ENCODE measurements at regions of chr2 and their contacts with region 1.

Region 1: GRCh38 chr2:67290451-67291290 is 106.5 kb upstream of the ETAA1 start:
- DNase-seq: peak; percentile 74 to 99
- H3K4me3 ChIP-seq: peak overlapping the region; percentile 25; the same call in 1 of the 2 replicates
- H3K27ac ChIP-seq: peak overlapping the region; percentile 98
- H3K4me1 ChIP-seq: peaks cover 39% of the 10 kb centered on the region
- H3K27me3 ChIP-seq: no peaks in the 10 kb centered on the region
- CTCF ChIP-seq: no peak

Region 2: DNA sequence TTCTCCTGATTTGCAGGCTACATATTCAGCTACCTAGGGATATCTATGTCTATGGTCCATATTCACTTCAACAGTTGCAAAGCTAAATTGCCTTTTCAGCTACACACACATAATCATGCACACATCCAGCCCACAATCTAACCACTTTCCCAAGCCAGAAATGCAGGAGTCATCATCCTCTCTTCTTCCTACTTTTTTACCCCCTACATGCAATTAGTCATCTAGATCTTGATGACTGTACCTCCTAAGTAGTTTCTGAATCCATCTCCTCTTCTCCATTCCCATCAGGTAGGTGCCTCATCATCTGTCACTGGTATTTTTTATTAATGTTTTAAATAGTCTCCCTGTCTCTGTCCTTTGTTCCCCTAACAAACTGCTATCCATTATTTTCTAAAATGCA is 1834.6 kb before region 1 on chr2:
- CTCF ChIA-PET with region 1: no interaction called
- POLR2A ChIA-PET with region 1: no interaction called
- intact Hi-C with region 1: loop called (anchors 2 kb)
- DNase-seq: peak in 1 of 2 experiments; percentile 65
- H3K4me3 ChIP-seq: no peak overlapping the region
- H3K27ac ChIP-seq: no peak overlapping the region
- H3K4me1 ChIP-seq: peaks cover 69% of the 10 kb centered on the region
- H3K27me3 ChIP-seq: no peaks in the 10 kb centered on the region
- CTCF ChIP-seq: no peak

Region 3: DNA sequence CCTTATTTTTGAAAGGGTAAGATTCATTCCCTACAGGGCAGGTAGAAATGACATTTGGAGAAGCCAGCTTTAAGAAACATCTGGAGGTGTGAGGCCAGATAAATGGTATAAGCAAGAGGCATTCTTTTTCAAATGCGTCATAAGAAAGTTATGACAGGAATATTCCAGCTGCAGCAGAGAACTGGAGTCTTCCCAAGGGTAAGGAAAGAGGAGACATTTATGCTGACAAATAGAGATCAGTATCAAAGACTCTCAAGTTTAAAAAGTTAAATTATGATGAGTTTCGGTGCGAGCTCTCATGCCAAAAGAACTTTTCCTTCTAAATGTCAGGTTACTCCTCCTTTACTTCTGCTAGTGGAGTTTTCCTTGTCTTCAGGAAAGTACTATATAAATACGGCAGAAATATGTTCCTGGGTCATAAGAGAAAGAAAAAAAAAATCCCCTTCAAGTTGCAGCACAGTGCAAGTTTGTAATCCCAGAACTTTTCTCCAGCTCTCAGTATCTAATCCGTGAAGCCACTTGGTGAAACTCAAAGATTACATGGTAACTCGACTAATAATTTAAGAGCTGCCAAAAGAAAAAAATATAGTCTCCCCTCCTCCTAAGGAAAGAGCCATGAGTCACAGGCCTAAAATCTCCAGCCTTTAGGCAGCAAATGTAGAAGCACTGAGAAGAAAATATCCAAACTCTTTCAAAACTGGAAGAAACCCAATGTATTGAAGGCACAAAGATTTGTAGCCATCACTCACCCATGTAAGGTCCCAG is 427.6 kb before region 1 on chr2:
- CTCF ChIA-PET with region 1: no interaction called
- POLR2A ChIA-PET with region 1: no interaction called
- intact Hi-C with region 1: no loop called
- DNase-seq: no peak
- H3K4me3 ChIP-seq: no peak overlapping the region
- H3K27ac ChIP-seq: no peak overlapping the region
- H3K4me1 ChIP-seq: no peaks in the 10 kb centered on the region
- H3K27me3 ChIP-seq: no peaks in the 10 kb centered on the region
- CTCF ChIP-seq: no peak

Region 4: GRCh38 chr2:67221266-67221665 is 69.4 kb before region 1 on chr2:
- CTCF ChIA-PET with region 1: no interaction called
- POLR2A ChIA-PET with region 1: no interaction called
- intact Hi-C with region 1: no loop called
- DNase-seq: no peak
- H3K4me3 ChIP-seq: no peak overlapping the region
- H3K27ac ChIP-seq: no peak overlapping the region
- H3K4me1 ChIP-seq: no peaks in the 10 kb centered on the region
- H3K27me3 ChIP-seq: no peaks in the 10 kb centered on the region
- CTCF ChIP-seq: no peak

Region 5: GRCh38 chr2:67259581-67260342 is 30.9 kb before region 1 on chr2:
- CTCF ChIA-PET with region 1: no interaction called
- POLR2A ChIA-PET with region 1: interaction called, 4 read pairs
- intact Hi-C with region 1: loop called (anchors 1 kb)
- DNase-seq: peak; percentile 45 to 87
- H3K4me3 ChIP-seq: no peak overlapping the region
- H3K27ac ChIP-seq: peak overlapping the region; percentile 63
- H3K4me1 ChIP-seq: peaks cover 43% of the 10 kb centered on the region
- H3K27me3 ChIP-seq: no peaks in the 10 kb centered on the region
- CTCF ChIP-seq: no peak

Region 6: GRCh38 chr2:67397143-67397986 is 106.7 kb after region 1 on chr2 and contains the start of gene ETAA1:
- CTCF ChIA-PET with region 1: no interaction called
- POLR2A ChIA-PET with region 1: interaction called, 7 read pairs
- intact Hi-C with region 1: loop called (anchors 1 kb)
- DNase-seq: peak; percentile 75 to 90
- H3K4me3 ChIP-seq: peak within 1 kb of the TSS; percentile 78
- H3K27ac ChIP-seq: peak within 1 kb of the TSS; percentile 57
- H3K4me1 ChIP-seq: peaks cover 34% of the 10 kb centered on the region
- H3K27me3 ChIP-seq: no peaks in the 10 kb centered on the region
- CTCF ChIP-seq: no peak
- total RNA-seq, gene ETAA1: 17.1 and 25.3 TPM in 2 replicates

Region 7: GRCh38 chr2:67437174-67437573 is 146.5 kb after region 1 on chr2:
- CTCF ChIA-PET with region 1: no interaction called
- POLR2A ChIA-PET with region 1: no interaction called
- intact Hi-C with region 1: loop called (anchors 5 kb)
- DNase-seq: peak in 1 of 2 experiments; percentile 91
- H3K4me3 ChIP-seq: no peak overlapping the region
- H3K27ac ChIP-seq: no peak overlapping the region
- H3K4me1 ChIP-seq: peaks cover 16% of the 10 kb centered on the region
- H3K27me3 ChIP-seq: no peaks in the 10 kb centered on the region
- CTCF ChIP-seq: no peak

Region 8: DNA sequence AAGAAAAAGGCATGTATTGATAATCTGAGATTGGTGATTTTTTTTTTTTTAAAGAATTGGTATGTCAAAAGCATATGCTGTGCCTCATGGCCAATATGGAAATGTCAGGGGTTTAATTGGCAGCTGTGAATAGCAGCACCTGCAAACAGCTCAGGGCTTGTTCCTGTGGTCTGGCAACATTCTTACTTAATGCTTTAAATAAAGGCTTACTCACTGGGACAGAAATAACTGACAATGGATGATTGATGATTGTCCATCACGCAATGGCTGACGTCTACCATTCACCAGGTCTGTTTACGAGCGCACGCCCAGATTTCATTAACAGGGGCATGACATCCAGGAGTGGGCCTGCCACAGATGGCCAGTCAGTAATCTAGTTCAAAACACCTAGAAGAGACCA is 173.1 kb after region 1 on chr2:
- CTCF ChIA-PET with region 1: no interaction called
- POLR2A ChIA-PET with region 1: no interaction called
- intact Hi-C with region 1: loop called (anchors 1 kb)
- DNase-seq: peak; percentile 70 to 98
- H3K4me3 ChIP-seq: no peak overlapping the region
- H3K27ac ChIP-seq: peak overlapping the region; percentile 56
- H3K4me1 ChIP-seq: peaks cover 26% of the 10 kb centered on the region
- H3K27me3 ChIP-seq: no peaks in the 10 kb centered on the region
- CTCF ChIP-seq: no peak